ENCODE measurements at regions of chr13 and their contacts with region 1.

Region 1: GRCh38 chr13:46622630-46623256 is 69.8 kb downstream of the LRCH1 start:
- DNase-seq: no peak
- ATAC-seq: peak; percentile 30
- H3K4me3 ChIP-seq: peak overlapping the region; percentile 1; the same call in 1 of the 2 replicates
- H3K27ac ChIP-seq: peak overlapping the region; percentile 55
- H3K4me1 ChIP-seq: peaks cover 61% of the 10 kb centered on the region
- H3K27me3 ChIP-seq: no peaks in the 10 kb centered on the region
- CTCF ChIP-seq: no peak
- EP300 ChIP-seq: no peak
- POLR2A ChIP-seq: no peak
- RAD21 ChIP-seq: no peak

Region 2: DNA sequence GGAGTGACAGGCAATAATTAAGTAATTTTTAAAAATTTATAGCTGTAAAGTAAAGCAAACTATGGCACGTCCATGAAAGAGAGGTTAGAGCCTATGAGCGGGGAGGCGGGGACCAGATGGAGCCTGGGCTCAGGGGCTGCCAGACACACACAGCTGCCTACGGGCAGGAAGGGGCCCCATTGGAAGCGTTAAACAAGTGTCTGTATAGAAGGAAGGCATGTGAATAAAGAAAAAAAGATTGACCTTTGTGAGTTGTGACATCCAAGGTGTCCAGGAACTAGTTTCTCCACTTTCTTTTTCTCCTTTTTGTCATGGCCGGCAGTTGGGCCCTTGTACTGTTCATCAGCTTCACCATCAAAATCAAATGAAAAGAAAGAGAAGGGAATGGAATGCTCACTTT is 13.0 kb before region 1 on chr13:
- CTCF ChIA-PET with region 1: interaction called, 9 read pairs
- POLR2A ChIA-PET with region 1: interaction called, 20 read pairs
- RAD21 ChIA-PET with region 1: interaction called, 40 read pairs
- SMC1A ChIA-PET with region 1: interaction called, 170 read pairs
- in situ Hi-C with region 1: no loop called
- intact Hi-C with region 1: no loop called
- DNase-seq: no peak
- ATAC-seq: no peak
- H3K4me3 ChIP-seq: no peak overlapping the region
- H3K27ac ChIP-seq: no peak overlapping the region
- H3K4me1 ChIP-seq: peaks cover 40% of the 10 kb centered on the region
- H3K27me3 ChIP-seq: no peaks in the 10 kb centered on the region
- CTCF ChIP-seq: no peak
- EP300 ChIP-seq: no peak
- POLR2A ChIP-seq: no peak
- RAD21 ChIP-seq: no peak

Region 3: DNA sequence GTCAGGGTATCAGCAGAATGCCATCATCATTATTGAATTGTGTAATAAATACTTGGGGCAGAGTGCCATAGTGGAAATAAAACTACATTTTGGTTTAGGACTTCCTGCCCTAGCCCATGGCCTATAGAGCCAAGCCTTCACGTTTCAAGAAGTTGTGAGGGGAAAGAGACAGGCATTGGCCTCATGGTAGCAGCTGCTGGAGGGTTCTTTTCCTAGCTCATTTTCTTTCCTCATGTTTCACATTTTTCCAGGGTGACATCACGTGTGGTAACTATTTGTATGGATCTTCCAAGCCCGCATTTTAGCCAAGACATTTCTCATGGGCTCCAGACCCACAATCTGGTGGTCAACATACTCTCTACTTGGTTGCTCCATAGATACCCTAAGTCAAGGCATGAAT is 10.7 kb after region 1 on chr13:
- CTCF ChIA-PET with region 1: interaction called, 39 read pairs
- POLR2A ChIA-PET with region 1: interaction called, 16 read pairs
- RAD21 ChIA-PET with region 1: interaction called, 17 read pairs
- SMC1A ChIA-PET with region 1: interaction called, 33 read pairs
- in situ Hi-C with region 1: no loop called
- intact Hi-C with region 1: no loop called
- DNase-seq: no peak
- ATAC-seq: no peak
- H3K4me3 ChIP-seq: no peak overlapping the region
- H3K27ac ChIP-seq: no peak overlapping the region
- H3K4me1 ChIP-seq: peaks cover 18% of the 10 kb centered on the region
- H3K27me3 ChIP-seq: no peaks in the 10 kb centered on the region
- CTCF ChIP-seq: no peak
- EP300 ChIP-seq: no peak
- POLR2A ChIP-seq: no peak
- RAD21 ChIP-seq: no peak

Region 4: GRCh38 chr13:46639033-46639981 is 16.6 kb after region 1 on chr13:
- CTCF ChIA-PET with region 1: interaction called, 6 read pairs
- POLR2A ChIA-PET with region 1: interaction called, 16 read pairs
- RAD21 ChIA-PET with region 1: interaction called, 17 read pairs
- SMC1A ChIA-PET with region 1: interaction called, 13 read pairs
- in situ Hi-C with region 1: no loop called
- intact Hi-C with region 1: no loop called
- DNase-seq: peak; percentile 71
- ATAC-seq: peak; percentile 95
- H3K4me3 ChIP-seq: peak overlapping the region; percentile 41
- H3K27ac ChIP-seq: peak overlapping the region; percentile 56
- H3K4me1 ChIP-seq: peaks cover 20% of the 10 kb centered on the region
- H3K27me3 ChIP-seq: no peaks in the 10 kb centered on the region
- CTCF ChIP-seq: no peak
- EP300 ChIP-seq: peak; percentile 93 to 96
- POLR2A ChIP-seq: no peak
- RAD21 ChIP-seq: no peak

Region 5: DNA sequence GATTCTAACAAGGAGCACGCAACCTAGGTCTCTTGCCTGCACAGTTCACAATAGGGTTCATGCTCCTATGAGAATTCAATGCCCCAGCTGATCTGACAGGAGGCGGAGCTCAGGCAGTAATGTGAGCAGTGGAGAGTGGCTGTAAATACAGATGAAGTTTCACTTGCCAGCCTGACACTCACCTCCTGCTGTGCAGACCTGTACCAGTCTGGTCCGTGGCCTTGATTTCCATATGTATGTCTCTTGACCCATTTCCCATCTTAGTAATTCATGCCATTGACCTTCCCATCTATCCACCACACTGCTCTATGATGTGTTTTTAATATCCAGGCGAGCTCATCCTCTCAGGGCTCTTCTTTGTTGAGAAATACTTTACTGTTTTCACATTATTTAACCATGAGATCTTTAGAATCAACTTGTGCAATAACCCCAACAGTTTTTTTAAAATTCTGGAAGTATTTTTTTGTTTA is 25.5 kb after region 1 on chr13:
- CTCF ChIA-PET with region 1: interaction called, 6 read pairs
- POLR2A ChIA-PET with region 1: interaction called, 4 read pairs
- RAD21 ChIA-PET with region 1: interaction called, 9 read pairs
- SMC1A ChIA-PET with region 1: interaction called, 456 read pairs
- in situ Hi-C with region 1: no loop called
- intact Hi-C with region 1: no loop called
- DNase-seq: no peak
- ATAC-seq: peak; percentile 95
- H3K4me3 ChIP-seq: no peak overlapping the region
- H3K27ac ChIP-seq: no peak overlapping the region
- H3K4me1 ChIP-seq: peaks cover 34% of the 10 kb centered on the region
- H3K27me3 ChIP-seq: no peaks in the 10 kb centered on the region
- CTCF ChIP-seq: no peak
- EP300 ChIP-seq: no peak
- POLR2A ChIP-seq: no peak
- RAD21 ChIP-seq: no peak

Region 6: GRCh38 chr13:46662690-46663089 is 39.9 kb after region 1 on chr13:
- CTCF ChIA-PET with region 1: interaction called, 6 read pairs
- POLR2A ChIA-PET with region 1: interaction called, 4 read pairs
- RAD21 ChIA-PET with region 1: interaction called, 17 read pairs
- SMC1A ChIA-PET with region 1: interaction called, 456 read pairs
- in situ Hi-C with region 1: no loop called
- intact Hi-C with region 1: no loop called
- DNase-seq: no peak
- ATAC-seq: peak; percentile 70
- H3K4me3 ChIP-seq: no peak overlapping the region
- H3K27ac ChIP-seq: peak overlapping the region; percentile 51; the same call in 1 of the 2 replicates
- H3K4me1 ChIP-seq: peaks cover 47% of the 10 kb centered on the region
- H3K27me3 ChIP-seq: no peaks in the 10 kb centered on the region
- CTCF ChIP-seq: no peak
- EP300 ChIP-seq: peak in 1 of 2 experiments; percentile 59; a peak in 2 of 4 replicates
- POLR2A ChIP-seq: no peak
- RAD21 ChIP-seq: no peak

Region 7: DNA sequence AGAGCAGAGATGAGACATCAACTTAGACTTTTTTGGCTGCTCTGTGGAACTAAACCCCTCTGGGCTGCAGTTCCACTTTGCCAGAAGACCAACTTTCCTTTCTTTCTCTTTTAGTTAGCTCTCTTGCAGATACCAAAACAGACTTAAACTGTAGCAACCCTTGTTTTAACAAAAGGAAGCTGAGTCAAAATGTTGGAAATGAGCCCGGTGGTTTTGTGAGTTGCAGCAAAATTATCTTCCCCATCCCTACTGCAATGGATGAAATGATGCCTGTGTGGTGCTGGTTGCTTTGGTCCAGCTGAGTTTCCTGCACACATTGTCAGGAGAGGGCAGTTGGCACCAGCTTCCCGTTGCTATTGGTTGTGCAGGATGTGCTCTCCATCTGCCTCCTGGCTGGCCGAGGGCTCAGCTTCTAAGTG is 45.6 kb after region 1 on chr13:
- CTCF ChIA-PET with region 1: no interaction called
- POLR2A ChIA-PET with region 1: interaction called, 4 read pairs
- RAD21 ChIA-PET with region 1: interaction called, 17 read pairs
- SMC1A ChIA-PET with region 1: interaction called, 456 read pairs
- in situ Hi-C with region 1: no loop called
- intact Hi-C with region 1: no loop called
- DNase-seq: no peak
- ATAC-seq: peak; percentile 11
- H3K4me3 ChIP-seq: peak overlapping the region; percentile 66
- H3K27ac ChIP-seq: peak overlapping the region; percentile 91
- H3K4me1 ChIP-seq: peaks cover 30% of the 10 kb centered on the region
- H3K27me3 ChIP-seq: no peaks in the 10 kb centered on the region
- CTCF ChIP-seq: no peak
- EP300 ChIP-seq: 0 out of 4 replicates have a peak, but pooled peaks of 1 of the 2 experiments have one; percentile 17
- POLR2A ChIP-seq: no peak
- RAD21 ChIP-seq: no peak

Region 8: DNA sequence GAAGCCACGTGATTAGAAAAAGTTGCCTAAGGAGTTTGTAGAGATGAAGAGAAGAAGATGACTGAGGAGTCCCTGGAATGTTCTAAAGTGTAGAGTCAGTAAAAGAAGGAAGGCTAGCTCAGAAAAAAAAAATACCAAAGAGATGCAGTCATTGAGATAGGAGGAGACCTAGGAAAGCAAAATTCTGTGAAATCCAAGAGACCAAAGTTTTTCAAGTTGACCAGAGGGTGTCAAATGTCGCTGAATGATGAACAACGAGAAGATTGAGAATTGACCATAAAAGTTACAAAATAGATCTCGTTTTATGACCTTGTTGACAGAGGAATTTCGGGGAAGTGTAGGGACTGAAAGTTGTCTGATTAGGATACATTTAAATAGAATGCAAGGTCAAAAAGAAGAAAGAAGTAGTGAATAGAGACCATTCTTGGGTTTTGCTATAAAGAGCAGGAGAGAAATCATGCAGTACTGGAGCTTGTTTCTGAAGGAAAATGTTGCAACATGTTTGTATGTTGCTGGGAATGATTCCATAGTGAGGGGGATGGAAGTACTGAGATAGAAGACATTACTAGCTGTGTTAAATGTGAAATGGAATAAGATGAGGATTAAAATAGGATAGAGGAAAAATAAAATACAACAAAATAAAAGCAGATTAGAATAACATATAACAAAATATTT is 304.3 kb after region 1 on chr13:
- CTCF ChIA-PET with region 1: no interaction called
- POLR2A ChIA-PET with region 1: no interaction called
- RAD21 ChIA-PET with region 1: no interaction called
- SMC1A ChIA-PET with region 1: no interaction called
- in situ Hi-C with region 1: no loop called
- intact Hi-C with region 1: no loop called
- DNase-seq: no peak
- ATAC-seq: no peak
- H3K4me3 ChIP-seq: no peak overlapping the region
- H3K27ac ChIP-seq: no peak overlapping the region
- H3K4me1 ChIP-seq: peaks cover 3% of the 10 kb centered on the region; the same call in 1 of the 2 replicates
- H3K27me3 ChIP-seq: no peaks in the 10 kb centered on the region
- CTCF ChIP-seq: no peak
- EP300 ChIP-seq: no peak
- POLR2A ChIP-seq: no peak
- RAD21 ChIP-seq: no peak